ENCODE measurements at regions of chr10 and their contacts with region 1.

Region 1: GRCh38 chr10:132054564-132054963 is 11.2 kb upstream of the JAKMIP3 start:
- DNase-seq: peak; percentile 43

Region 2: GRCh38 chr10:130737621-130738020 is 1316.9 kb before region 1 on chr10:
- intact Hi-C with region 1: loop called in 1 of 2 experiments (anchors 5 kb)
- DNase-seq: peak; percentile 13

Region 3: GRCh38 chr10:131909014-131909808 is 145.4 kb before region 1 on chr10:
- intact Hi-C with region 1: no loop called
- DNase-seq: no peak

Measured in posterior vena cava (tissue), 2 donors.